WTC11 (cell line): ENCODE measurements at regions of chr5 and their contacts with region 1.

Region 1: GRCh38 chr5:91183737-91184136 is 199.4 kb downstream of the ARRDC3 start:
- DNase-seq: no peak
- ATAC-seq: peak; percentile 78
- H3K4me3 Mint-ChIP-seq: no peak overlapping the region
- H3K27ac Mint-ChIP-seq: peak overlapping the region; percentile 75
- H3K4me1 Mint-ChIP-seq: peaks cover 22% of the 10 kb centered on the region
- H3K27me3 Mint-ChIP-seq: no peaks in the 10 kb centered on the region
- CTCF ChIP-seq: no peak

Region 2: DNA sequence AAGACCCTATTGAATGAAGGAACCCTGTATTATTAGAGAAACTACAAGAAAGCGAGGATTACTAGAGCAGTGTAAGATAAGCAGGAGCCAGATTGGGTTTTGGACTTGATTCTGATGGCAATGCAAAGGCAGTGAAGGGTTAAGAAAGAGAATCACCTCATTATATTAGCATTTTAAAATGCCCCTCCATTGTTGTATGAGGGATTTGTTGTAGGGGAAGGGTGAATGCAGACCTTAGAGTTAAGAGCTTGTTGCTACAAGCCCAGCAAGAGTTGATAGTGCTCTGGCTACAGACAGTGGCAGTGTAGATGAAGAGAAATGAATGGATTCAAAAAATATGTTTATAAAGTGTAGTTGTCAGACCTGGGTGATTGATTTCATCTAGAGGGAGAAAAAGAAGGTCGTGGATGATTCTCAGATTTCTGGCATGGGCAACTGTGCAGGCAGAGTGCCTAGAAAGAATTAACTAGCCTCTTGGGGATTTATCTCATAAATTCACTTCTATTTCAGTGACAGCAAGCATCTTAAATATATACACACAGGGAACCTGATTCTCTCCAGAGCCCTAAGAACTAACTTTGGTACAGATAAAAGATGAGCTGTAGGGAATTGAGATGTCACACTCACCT is 145.4 kb before region 1 on chr5:
- CTCF ChIA-PET with region 1: no interaction called
- POLR2A ChIA-PET with region 1: no interaction called
- DNase-seq: no peak
- ATAC-seq: peak; percentile 90
- H3K4me3 Mint-ChIP-seq: peak overlapping the region; percentile 28
- H3K27ac Mint-ChIP-seq: peak overlapping the region; percentile 91
- H3K4me1 Mint-ChIP-seq: peaks cover 37% of the 10 kb centered on the region
- H3K27me3 Mint-ChIP-seq: no peaks in the 10 kb centered on the region
- CTCF ChIP-seq: no peak

Region 3: DNA sequence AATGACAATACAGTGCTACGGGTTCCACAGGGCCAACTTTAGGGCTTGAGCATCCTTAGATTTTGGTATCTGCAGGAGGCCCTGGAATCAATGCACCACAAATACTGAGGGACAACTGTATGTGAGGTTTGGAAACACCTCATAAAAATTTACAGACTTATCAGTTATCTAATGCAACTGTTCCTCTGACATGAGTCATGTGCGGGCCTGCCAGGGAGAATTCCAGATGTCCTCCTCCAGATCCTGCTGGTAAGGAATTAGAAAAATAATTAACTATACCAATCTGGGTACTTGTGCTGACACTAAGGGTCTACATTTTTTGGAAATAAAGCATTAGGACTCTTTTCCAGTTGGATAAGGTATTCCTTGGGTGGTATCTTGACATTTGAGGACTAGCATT is 133.9 kb before region 1 on chr5:
- CTCF ChIA-PET with region 1: no interaction called
- POLR2A ChIA-PET with region 1: no interaction called
- DNase-seq: no peak
- ATAC-seq: no peak
- H3K4me3 Mint-ChIP-seq: no peak overlapping the region
- H3K27ac Mint-ChIP-seq: no peak overlapping the region
- H3K4me1 Mint-ChIP-seq: peaks cover 12% of the 10 kb centered on the region
- H3K27me3 Mint-ChIP-seq: no peaks in the 10 kb centered on the region
- CTCF ChIP-seq: no peak

Region 4: GRCh38 chr5:91219803-91220371 is 36.1 kb after region 1 on chr5:
- CTCF ChIA-PET with region 1: interaction called, 11 read pairs
- POLR2A ChIA-PET with region 1: no interaction called
- DNase-seq: no peak
- ATAC-seq: peak; percentile 77
- H3K4me3 Mint-ChIP-seq: no peak overlapping the region
- H3K27ac Mint-ChIP-seq: no peak overlapping the region
- H3K4me1 Mint-ChIP-seq: no peaks in the 10 kb centered on the region
- H3K27me3 Mint-ChIP-seq: no peaks in the 10 kb centered on the region
- CTCF ChIP-seq: 0 out of 2 replicates have a peak, but pooled peaks have one; percentile 15